Panc1 (cell line): ENCODE measurements at regions of chrX and their contacts with region 1.

Region 1: DNA sequence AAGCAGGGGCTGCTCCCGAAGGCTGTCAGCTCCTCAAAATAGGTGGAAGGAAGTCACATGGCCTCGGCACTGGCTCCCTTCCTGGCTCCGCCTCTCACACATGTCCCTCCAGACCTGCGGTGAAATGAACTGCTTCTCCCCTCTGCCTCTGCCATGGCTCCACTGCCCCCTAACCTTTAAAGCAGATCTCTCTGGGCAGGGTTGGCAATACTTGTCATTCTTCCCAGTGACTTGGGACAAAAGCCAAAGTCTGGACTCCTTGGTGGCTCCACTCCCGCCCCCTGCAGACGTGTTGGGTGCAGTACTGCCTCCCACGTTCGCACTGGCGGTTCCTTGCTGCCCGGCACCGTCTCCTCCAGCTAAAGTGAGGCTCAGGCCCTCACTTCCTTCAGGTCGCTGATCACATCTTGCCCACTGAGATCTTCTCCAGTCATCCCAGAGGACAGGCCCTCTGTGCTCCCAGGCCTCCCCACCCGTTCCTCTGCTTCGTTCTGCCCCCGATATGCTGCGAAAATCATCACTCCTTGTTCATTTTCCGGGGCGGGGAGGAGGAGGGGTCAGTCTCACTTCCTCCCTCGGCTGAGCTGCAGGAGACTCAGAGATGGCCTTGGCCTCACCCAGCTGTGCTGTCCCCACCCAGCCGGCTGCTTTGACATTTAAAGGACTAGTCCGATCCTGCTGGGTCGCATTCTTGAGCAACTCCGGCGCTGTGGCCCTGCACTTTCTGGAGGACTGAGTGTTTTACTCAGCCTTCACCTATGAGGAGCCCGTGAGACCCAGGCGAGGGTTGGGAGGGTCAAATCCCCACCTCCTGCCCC is 97.4 kb downstream of the PHKA2 start:
- DNase-seq: peak; percentile 15
- ATAC-seq: peak; percentile 86
- H3K4me3 ChIP-seq: peak overlapping the region; percentile 13 to 26; a peak in 3 of 4 replicates
- H3K27ac ChIP-seq: no peak overlapping the region
- H3K4me1 ChIP-seq: no peaks in the 10 kb centered on the region
- H3K27me3 ChIP-seq: no peaks in the 10 kb centered on the region
- CTCF ChIP-seq: peak; percentile 61

Region 2: DNA sequence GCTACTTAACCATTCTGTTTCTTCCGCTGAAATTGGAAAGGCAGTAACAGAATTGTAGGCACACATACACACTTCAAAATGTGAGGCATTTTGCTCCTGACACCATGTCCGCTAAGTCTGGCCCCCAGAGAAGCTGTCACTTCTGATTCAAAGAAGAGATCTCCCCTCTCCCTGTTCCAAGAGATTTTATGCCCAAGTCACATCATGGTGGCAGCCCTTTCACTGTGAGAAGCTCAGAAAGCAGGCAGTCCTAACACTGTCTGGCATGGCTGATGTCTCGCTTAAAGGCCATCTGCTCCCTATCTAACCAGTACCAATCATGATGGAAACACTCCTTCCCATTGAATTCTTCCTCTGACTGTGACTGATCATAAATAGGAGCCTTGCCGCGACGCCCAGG is 749.7 kb before region 1 on chrX:
- CTCF ChIA-PET with region 1: no interaction called
- POLR2A ChIA-PET with region 1: no interaction called
- in situ Hi-C with region 1: no loop called
- intact Hi-C with region 1: no loop called
- DNase-seq: no peak
- ATAC-seq: no peak
- H3K4me3 ChIP-seq: no peak overlapping the region
- H3K27ac ChIP-seq: no peak overlapping the region
- H3K4me1 ChIP-seq: no peaks in the 10 kb centered on the region
- H3K27me3 ChIP-seq: no peaks in the 10 kb centered on the region
- CTCF ChIP-seq: no peak

Region 3: DNA sequence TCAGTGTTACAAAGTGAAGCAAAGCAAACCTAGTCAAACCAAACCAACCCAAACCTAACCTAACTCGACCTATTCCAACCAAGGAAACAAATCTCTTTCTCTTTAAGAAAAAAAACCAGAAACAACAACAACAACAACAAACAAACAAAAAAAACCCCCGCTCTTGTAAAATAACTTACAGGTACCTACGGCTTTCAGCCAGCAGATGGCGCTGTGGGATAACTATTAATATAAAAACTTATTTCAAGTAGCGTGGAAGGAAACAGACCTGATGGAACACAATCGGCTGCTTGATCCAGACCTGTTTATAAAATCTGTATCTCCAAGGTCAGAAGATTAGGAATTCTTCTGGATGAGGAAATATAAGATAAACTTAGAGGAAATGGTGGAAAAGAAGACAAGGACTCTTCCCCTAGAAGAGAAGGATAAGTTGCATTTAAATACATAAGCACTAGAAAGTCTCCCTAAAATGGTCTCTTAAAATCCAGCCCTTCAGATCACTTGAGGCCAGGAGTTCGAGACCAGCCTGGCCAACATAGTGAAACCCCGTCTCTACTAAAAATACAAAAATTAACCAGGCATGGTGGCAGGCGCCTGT is 495.5 kb before region 1 on chrX:
- CTCF ChIA-PET with region 1: no interaction called
- POLR2A ChIA-PET with region 1: no interaction called
- in situ Hi-C with region 1: no loop called
- intact Hi-C with region 1: loop called (anchors 10 kb)
- DNase-seq: no peak
- ATAC-seq: no peak
- H3K4me3 ChIP-seq: no peak overlapping the region
- H3K27ac ChIP-seq: no peak overlapping the region
- H3K4me1 ChIP-seq: no peaks in the 10 kb centered on the region
- H3K27me3 ChIP-seq: no peaks in the 10 kb centered on the region
- CTCF ChIP-seq: peak; percentile 54; the same call in 1 of the 2 replicates

Region 4: GRCh38 chrX:19110642-19111041 is 224.1 kb after region 1 on chrX:
- CTCF ChIA-PET with region 1: interaction called, 10 read pairs
- POLR2A ChIA-PET with region 1: no interaction called
- in situ Hi-C with region 1: no loop called
- intact Hi-C with region 1: no loop called
- DNase-seq: no peak
- ATAC-seq: no peak
- H3K4me3 ChIP-seq: no peak overlapping the region
- H3K27ac ChIP-seq: no peak overlapping the region
- H3K4me1 ChIP-seq: no peaks in the 10 kb centered on the region
- H3K27me3 ChIP-seq: no peaks in the 10 kb centered on the region
- CTCF ChIP-seq: no peak

Region 5: DNA sequence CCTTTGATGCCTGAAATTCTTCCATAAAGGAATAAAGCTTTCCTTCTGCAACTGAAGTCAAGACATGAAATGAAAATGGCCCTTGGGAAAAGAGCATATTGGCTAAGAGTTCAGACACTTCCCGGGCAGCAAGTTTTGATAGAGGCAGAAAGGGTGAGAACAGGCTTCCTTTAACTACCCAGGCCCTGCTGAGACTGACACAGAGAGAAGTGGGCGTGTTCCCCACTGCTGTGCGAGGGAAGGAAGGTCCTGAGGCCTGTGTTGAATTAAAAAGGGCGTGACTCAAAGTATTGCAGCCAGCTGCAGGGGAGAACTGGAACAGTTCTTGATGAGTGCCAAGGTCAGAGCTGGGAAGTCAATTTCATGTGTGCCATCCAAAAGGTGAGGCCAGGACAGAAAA is 269.6 kb after region 1 on chrX:
- CTCF ChIA-PET with region 1: no interaction called
- POLR2A ChIA-PET with region 1: no interaction called
- in situ Hi-C with region 1: no loop called
- intact Hi-C with region 1: no loop called
- DNase-seq: no peak
- ATAC-seq: no peak
- H3K4me3 ChIP-seq: no peak overlapping the region
- H3K27ac ChIP-seq: no peak overlapping the region
- H3K4me1 ChIP-seq: no peaks in the 10 kb centered on the region
- H3K27me3 ChIP-seq: 0 out of 2 replicates have a peak, but pooled peaks cover 2% of the 10 kb centered on the region
- CTCF ChIP-seq: no peak